ENCODE measurements at regions of chr20 and their contacts with region 1.

Region 1: DNA sequence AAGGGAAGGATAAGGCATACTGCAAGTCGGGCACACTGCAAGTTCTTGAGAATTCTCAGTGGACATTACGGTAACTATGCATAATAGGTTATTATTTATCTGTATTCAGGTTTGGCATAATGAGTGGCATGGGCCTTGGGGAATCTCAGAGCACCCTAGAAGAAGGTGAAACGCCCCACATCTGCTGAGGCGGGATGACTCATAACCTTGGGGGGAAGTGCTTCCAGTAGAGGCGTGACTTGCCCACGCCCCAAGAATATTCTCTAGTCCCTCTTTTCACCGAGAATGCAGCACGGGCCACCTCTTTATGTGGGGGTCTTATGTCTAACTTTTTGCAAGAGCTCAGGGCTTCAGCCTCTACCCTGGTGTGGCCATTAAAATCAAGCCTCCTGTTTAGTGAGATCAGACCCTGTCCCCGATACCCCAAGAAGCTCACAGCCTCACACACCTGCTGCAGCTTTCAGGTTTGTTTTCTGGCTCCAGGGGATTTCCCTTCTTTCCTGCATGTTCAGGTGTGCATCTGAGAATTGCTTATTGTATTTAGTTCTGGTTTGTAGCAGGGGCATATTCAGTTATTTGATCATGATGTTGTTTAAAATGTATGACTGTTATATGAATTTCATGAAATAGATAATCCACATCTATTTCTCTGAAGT is 19.1 kb downstream of the ZFP64 start:
- DNase-seq: no peak
- ATAC-seq: no peak
- H3K4me3 ChIP-seq: no peak overlapping the region
- H3K4me3 Mint-ChIP-seq: no peak overlapping the region
- H3K27ac ChIP-seq: no peak overlapping the region
- H3K27ac Mint-ChIP-seq: no peak overlapping the region
- H3K4me1 ChIP-seq: no peaks in the 10 kb centered on the region
- H3K4me1 Mint-ChIP-seq: peaks cover 0 to 8% (median 0%) of the 10 kb centered on the region in 3 donors
- H3K27me3 ChIP-seq: no peaks in the 10 kb centered on the region
- H3K27me3 Mint-ChIP-seq: no peaks in the 10 kb centered on the region

Region 2: DNA sequence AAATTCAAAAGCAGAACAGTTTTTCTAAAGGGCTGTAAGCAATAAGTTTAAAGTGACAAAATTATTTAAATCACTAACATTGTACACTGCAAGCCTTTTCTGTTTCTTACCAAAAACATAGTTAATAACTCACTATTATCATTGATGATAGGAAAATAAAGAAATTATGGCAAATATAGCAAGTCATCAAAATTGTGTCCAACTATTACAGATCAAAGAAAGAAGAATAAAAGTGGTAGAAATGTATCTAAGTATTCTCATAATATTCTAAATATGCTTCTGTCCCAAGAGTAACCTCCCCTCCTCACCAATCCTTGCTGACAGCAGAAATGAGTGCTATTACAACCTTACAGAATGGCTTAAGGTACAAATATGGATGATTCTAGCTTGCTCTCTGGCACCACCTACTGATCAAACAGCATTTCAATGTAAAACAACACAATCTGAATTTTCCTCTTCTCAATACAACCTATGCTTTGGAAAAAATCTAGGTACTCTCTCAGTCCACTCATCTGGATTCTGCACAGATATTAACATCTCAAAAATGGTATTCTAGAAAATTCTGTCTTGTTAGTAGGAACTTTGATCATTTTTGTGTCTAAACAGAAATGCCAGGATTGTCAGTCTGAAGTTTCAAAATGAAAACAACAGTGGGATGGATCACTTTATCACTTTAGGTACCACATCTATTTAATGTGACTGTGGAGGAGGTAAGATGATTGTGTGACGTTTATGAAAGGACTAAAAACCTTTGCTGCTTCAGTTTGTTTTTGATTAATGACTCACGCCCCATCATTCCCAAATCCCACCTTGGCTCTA is 21.9 kb before region 1 on chr20:
- CTCF ChIA-PET with region 1: interaction called, 3 to 10 read pairs
- POLR2A ChIA-PET with region 1: no interaction called
- DNase-seq: peak in 7 of 35 experiments; percentile 3 to 58 (median 12)
- ATAC-seq: peak in 2 of 4 experiments; percentile 45 to 60
- H3K4me3 ChIP-seq: no peak overlapping the region
- H3K4me3 Mint-ChIP-seq: no peak overlapping the region
- H3K27ac ChIP-seq: no peak overlapping the region
- H3K27ac Mint-ChIP-seq: peak overlapping the region in 1 of 2 donors; percentile 0
- H3K4me1 ChIP-seq: no peaks in the 10 kb centered on the region
- H3K4me1 Mint-ChIP-seq: no peaks in the 10 kb centered on the region
- H3K27me3 ChIP-seq: no peaks in the 10 kb centered on the region
- H3K27me3 Mint-ChIP-seq: no peaks in the 10 kb centered on the region

Region 3: DNA sequence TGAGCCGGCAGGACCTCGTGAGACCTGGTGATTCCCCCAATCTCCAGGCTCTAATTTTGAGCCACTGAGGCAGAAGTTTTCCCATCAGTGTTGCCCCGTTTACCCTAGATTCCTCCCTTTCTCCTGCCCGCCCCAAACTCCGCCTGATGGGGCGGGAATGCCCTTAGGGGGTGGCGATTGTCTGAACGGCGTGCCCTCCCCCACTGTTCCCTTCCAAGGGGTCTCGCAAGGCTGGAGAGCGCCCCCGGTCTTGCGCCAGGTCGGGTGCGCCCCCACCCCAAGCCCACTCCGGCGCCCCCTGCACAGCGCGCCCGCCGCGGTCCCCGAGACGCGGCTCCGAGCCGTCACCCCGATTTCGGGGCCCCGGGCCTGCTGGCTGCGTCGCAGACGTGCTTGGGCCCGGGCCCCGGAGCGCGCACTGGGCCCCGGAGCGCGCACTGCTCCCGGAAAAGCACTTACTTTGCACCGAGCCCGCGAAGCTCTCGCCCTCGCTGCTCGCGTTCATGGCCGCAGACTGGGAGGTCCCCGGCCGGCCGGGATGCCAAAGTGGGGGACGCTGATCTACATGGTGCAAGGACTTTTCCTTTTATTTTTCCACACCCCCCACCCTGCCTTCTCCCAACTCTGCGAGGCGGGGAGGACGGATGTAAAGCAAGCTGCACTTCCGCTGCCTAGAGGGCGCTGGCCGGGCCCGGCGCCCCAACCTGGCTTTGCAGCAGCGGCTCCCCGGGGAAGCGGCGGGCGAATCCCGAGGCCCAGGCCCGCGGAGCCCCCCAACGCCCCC is 18.8 kb after region 1 on chr20 and contains the start of gene ZFP64:
- CTCF ChIA-PET with region 1: no interaction called
- POLR2A ChIA-PET with region 1: no interaction called
- DNase-seq: peak; percentile 56 to 83 (median 69)
- ATAC-seq: peak; percentile 82 to 86 (median 84)
- H3K4me3 ChIP-seq: peak within 1 kb of the TSS; percentile 80 to 96
- H3K4me3 Mint-ChIP-seq: peak within 1 kb of the TSS; percentile 92 to 95 (median 93)
- H3K27ac ChIP-seq: peak within 1 kb of the TSS; percentile 74
- H3K27ac Mint-ChIP-seq: peak within 1 kb of the TSS; percentile 92 to 95
- H3K4me1 ChIP-seq: peaks cover 4 to 15% of the 10 kb centered on the region in 2 experiments
- H3K4me1 Mint-ChIP-seq: peaks cover 10 to 24% (median 18%) of the 10 kb centered on the region in 3 donors
- H3K27me3 ChIP-seq: no peaks in the 10 kb centered on the region
- H3K27me3 Mint-ChIP-seq: no peaks in the 10 kb centered on the region
- total RNA-seq, gene ZFP64: 8.1 to 12.1 (median 11.7) TPM

Measured in T-cell (primary cell).